Panc1 (cell line): ENCODE measurements at regions of chr5 and their contacts with region 1.

Region 1: GRCh38 chr5:138503487-138504270 is 38.4 kb downstream of the EGR1 start:
- DNase-seq: peak; percentile 62
- ATAC-seq: peak; percentile 88
- H3K4me3 ChIP-seq: no peak overlapping the region
- H3K27ac ChIP-seq: no peak overlapping the region
- H3K4me1 ChIP-seq: peaks cover 6% of the 10 kb centered on the region; the same call in 1 of the 2 replicates
- H3K27me3 ChIP-seq: no peaks in the 10 kb centered on the region
- CTCF ChIP-seq: peak; percentile 86

Region 2: GRCh38 chr5:138449501-138450239 is 54.0 kb before region 1 on chr5:
- CTCF ChIA-PET with region 1: interaction called, 51 read pairs
- POLR2A ChIA-PET with region 1: no interaction called
- in situ Hi-C with region 1: no loop called
- intact Hi-C with region 1: loop called (anchors 1 kb)
- DNase-seq: no peak
- ATAC-seq: peak; percentile 96
- H3K4me3 ChIP-seq: peak overlapping the region in 1 of 2 experiments; percentile 24; a peak in 1 of 4 replicates
- H3K27ac ChIP-seq: no peak overlapping the region
- H3K4me1 ChIP-seq: peaks cover 3% of the 10 kb centered on the region; the same call in 1 of the 2 replicates
- H3K27me3 ChIP-seq: no peaks in the 10 kb centered on the region
- CTCF ChIP-seq: peak; percentile 97

Region 3: DNA sequence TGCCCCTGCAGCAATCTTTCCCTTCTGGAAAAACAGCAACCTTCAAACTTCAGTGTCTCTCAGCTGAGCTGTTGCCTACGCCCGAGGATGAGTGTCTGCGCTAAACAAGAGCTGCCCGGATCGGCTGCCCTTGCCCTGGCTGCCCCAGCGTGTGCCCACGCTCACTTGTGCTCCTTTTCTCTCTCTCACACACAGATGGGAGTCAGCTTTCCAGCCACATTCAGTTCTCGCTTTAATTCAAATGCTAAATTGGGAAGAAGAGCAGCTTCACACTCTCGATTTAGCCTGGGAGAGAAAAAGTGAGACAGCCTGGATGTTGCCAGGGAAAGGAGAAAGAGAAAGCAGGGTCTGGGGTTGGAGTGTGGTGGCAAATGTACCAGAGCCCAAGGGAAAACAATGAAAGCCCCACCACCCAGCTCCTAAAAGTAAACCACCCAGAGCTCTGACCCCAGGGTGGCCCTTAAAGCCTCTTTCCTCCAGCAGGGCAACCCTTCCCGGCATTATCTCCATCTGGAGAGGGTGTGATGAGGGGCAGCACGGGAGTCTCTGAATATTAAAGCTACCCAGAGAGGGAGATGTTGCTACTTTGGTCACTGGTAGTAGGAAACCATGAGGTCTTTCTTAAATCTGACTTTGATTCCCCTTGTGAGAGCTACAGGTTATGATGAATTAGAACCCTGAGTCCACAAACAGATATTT is 48.3 kb before region 1 on chr5:
- CTCF ChIA-PET with region 1: interaction called, 51 read pairs
- POLR2A ChIA-PET with region 1: no interaction called
- in situ Hi-C with region 1: no loop called
- intact Hi-C with region 1: loop called (anchors 1 kb)
- DNase-seq: no peak
- ATAC-seq: no peak
- H3K4me3 ChIP-seq: no peak overlapping the region
- H3K27ac ChIP-seq: no peak overlapping the region
- H3K4me1 ChIP-seq: no peaks in the 10 kb centered on the region
- H3K27me3 ChIP-seq: no peaks in the 10 kb centered on the region
- CTCF ChIP-seq: no peak

Region 4: DNA sequence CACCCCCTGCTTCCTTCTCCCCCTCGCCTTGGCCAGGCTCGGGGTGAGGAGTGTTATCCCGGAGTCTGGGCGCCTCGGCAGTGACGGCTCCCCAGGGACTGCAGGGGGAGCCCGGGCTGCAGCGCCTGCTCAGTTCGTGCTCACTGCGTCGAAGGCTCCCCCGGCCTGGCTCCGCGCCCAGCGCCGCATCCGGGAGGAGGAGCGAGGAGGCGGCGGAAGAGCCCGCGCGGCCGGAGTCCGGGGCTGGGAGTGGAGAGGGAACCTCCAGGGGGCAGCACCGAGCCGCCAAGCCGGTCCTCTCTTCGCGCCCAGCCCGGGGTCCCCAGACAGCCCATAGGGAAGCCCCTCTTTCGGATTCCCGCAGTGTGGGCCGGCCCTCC is 39.7 kb before region 1 on chr5:
- CTCF ChIA-PET with region 1: interaction called, 10 read pairs
- POLR2A ChIA-PET with region 1: interaction called, 7 read pairs
- in situ Hi-C with region 1: no loop called
- intact Hi-C with region 1: no loop called
- DNase-seq: peak; percentile 69
- ATAC-seq: peak; percentile 78
- H3K4me3 ChIP-seq: peak overlapping the region; percentile 81 to 87
- H3K27ac ChIP-seq: peak overlapping the region; percentile 97
- H3K4me1 ChIP-seq: peaks cover 5% of the 10 kb centered on the region; the same call in 1 of the 2 replicates
- H3K27me3 ChIP-seq: no peaks in the 10 kb centered on the region
- CTCF ChIP-seq: peak; percentile 99

Region 5: DNA sequence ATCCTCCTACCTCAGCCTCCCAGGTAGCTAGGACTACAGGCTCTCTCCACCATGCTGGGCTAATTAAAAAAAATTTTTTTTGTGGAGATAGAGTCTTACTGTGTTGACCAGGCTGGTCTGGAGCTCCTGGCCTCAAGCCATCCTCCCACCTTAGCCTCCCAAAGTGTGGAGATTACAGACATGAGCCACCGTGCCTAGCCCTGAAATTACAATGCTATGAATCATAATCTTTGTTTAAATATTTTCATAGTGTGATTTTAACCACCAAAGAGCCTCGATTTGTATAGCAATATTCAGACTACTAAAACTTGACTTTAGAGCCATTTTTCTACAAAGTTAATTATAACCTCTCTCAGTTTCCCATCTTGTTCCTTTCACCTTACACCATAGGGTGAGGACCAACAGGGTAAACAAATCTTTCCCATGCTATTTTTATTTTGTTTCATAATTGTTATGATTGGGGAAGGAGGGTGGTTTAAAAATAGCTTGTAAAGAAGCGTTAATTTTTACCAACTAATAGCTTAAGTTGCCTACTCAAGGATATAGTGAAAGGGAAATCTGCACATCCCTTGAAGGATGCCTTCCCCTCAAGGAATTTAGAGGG is 1090.1 kb after region 1 on chr5:
- CTCF ChIA-PET with region 1: interaction called, 16 read pairs
- POLR2A ChIA-PET with region 1: no interaction called
- in situ Hi-C with region 1: no loop called
- intact Hi-C with region 1: no loop called
- DNase-seq: peak; percentile 20
- ATAC-seq: peak; percentile 83
- H3K4me3 ChIP-seq: no peak overlapping the region
- H3K27ac ChIP-seq: peak overlapping the region; percentile 40; the same call in 1 of the 2 replicates
- H3K4me1 ChIP-seq: peaks cover 14% of the 10 kb centered on the region
- H3K27me3 ChIP-seq: no peaks in the 10 kb centered on the region
- CTCF ChIP-seq: no peak